Endothelial cell of umbilical vein (primary cell): ENCODE measurements at regions of chr21 and their contacts with region 1.

Region 1: GRCh38 chr21:41167348-41168342 is at the start of gene BACE2:
- DNase-seq: peak; percentile 72
- H3K4me3 ChIP-seq: peak within 1 kb of the TSS; percentile 77 to 95 (median 83)
- H3K27ac ChIP-seq: peak within 1 kb of the TSS; percentile 70
- H3K4me1 ChIP-seq: peaks cover 32% of the 10 kb centered on the region
- H3K27me3 ChIP-seq: no peaks in the 10 kb centered on the region
- CTCF ChIP-seq: peak; percentile 53 to 63
- POLR2A ChIP-seq: no peak
- total RNA-seq, gene BACE2: 128 and 184 TPM in 2 replicates

Region 2: DNA sequence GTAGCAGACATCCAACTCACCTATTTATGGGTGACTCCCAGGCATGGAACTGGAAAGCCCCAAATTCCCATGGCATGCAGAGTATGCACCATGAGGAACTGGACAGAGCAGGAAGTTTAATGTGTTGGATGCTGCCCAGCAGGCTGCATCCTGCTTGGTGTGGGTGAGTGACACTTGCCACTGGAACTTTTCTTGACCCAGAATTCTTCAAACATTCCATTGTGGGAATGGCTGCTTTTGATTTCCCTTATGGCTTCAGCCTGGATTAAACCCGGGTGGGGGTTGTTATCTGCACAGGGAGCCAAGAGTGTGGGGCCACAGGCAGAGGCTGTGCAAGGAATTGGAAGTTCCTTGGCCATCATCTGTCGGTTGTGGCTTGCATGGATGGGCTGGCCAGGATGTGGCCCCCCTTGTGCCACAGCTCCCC is 26.6 kb before region 1 on chr21:
- CTCF ChIA-PET with region 1: no interaction called
- POLR2A ChIA-PET with region 1: no interaction called
- dilution Hi-C with region 1: no loop called
- intact Hi-C with region 1: loop called (anchors 2 kb)
- DNase-seq: peak; percentile 40
- H3K4me3 ChIP-seq: no peak overlapping the region
- H3K27ac ChIP-seq: no peak overlapping the region
- H3K4me1 ChIP-seq: no peaks in the 10 kb centered on the region
- H3K27me3 ChIP-seq: no peaks in the 10 kb centered on the region
- CTCF ChIP-seq: no peak
- POLR2A ChIP-seq: no peak

Region 3: GRCh38 chr21:41183575-41183974 is 15.9 kb after region 1 on chr21:
- CTCF ChIA-PET with region 1: interaction called, 18 read pairs
- POLR2A ChIA-PET with region 1: no interaction called
- dilution Hi-C with region 1: no loop called
- intact Hi-C with region 1: no loop called
- DNase-seq: no peak
- H3K4me3 ChIP-seq: no peak overlapping the region
- H3K27ac ChIP-seq: no peak overlapping the region
- H3K4me1 ChIP-seq: no peaks in the 10 kb centered on the region
- H3K27me3 ChIP-seq: no peaks in the 10 kb centered on the region
- CTCF ChIP-seq: no peak
- POLR2A ChIP-seq: no peak

Region 4: GRCh38 chr21:41207401-41208068 is 39.9 kb after region 1 on chr21:
- CTCF ChIA-PET with region 1: interaction called, 6 read pairs
- POLR2A ChIA-PET with region 1: no interaction called
- dilution Hi-C with region 1: no loop called
- intact Hi-C with region 1: loop called (anchors 5 kb)
- DNase-seq: peak; percentile 80
- H3K4me3 ChIP-seq: no peak overlapping the region
- H3K27ac ChIP-seq: no peak overlapping the region
- H3K4me1 ChIP-seq: peaks cover 2% of the 10 kb centered on the region
- H3K27me3 ChIP-seq: no peaks in the 10 kb centered on the region
- CTCF ChIP-seq: no peak
- POLR2A ChIP-seq: no peak

Region 5: GRCh38 chr21:41247561-41248284 is 80.1 kb after region 1 on chr21:
- CTCF ChIA-PET with region 1: interaction called, 6 read pairs
- POLR2A ChIA-PET with region 1: no interaction called
- dilution Hi-C with region 1: no loop called
- intact Hi-C with region 1: loop called (anchors 1 kb)
- DNase-seq: peak; percentile 97
- H3K4me3 ChIP-seq: no peak overlapping the region
- H3K27ac ChIP-seq: peak overlapping the region; percentile 99
- H3K4me1 ChIP-seq: peaks cover 36% of the 10 kb centered on the region
- H3K27me3 ChIP-seq: no peaks in the 10 kb centered on the region
- CTCF ChIP-seq: no peak
- POLR2A ChIP-seq: no peak

Region 6: DNA sequence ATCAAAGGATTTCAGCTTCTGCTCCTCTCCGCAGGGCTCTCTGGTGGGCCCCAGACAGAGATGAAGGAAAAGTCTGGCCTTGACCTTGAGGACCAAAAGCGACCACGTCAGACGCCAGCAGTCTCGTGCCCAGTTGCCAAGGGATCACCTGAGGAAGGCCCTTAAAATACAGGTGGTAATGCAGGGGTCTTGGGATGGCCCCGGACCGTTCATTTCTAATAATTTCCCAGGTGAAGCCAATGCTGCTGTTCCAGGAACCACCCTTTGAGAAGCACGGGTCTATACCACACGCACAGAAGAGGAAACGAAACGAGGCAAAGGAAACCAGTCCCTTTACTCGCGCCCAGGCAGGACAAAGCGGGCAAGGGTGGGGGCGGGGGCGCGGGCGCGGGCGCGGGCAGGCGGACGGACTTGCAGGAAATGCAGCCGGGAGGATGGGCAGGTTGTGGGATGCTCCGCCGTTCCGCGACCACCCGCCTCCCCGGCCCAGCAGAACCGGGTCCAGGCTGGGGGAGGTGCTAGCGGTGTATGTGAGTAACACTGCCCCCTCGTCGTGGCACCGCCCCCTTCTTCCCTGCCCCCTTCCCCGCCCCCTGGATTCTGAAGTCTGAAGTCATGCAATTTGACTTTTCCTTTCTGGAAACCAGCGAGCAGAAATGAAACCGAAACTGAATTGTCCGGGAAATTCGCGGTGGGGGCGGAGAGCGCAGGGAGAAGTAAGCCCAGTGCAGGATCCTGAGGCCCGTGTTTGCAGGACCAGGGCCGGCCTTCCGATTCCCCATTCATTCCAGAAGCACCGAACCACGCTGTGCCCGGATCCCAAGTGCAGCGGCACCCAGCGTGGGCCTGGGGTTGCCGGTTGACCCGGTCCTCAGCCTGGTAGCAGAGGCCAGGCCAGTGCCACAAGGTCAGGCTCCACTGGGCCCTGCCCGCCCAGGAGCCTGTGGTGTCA is 252.5 kb after region 1 on chr21:
- CTCF ChIA-PET with region 1: no interaction called
- POLR2A ChIA-PET with region 1: no interaction called
- dilution Hi-C with region 1: no loop called
- intact Hi-C with region 1: loop called (anchors 5 kb)
- DNase-seq: peak; percentile 91
- H3K4me3 ChIP-seq: peak overlapping the region; percentile 37 to 82 (median 39)
- H3K27ac ChIP-seq: peak overlapping the region; percentile 27
- H3K4me1 ChIP-seq: no peaks in the 10 kb centered on the region
- H3K27me3 ChIP-seq: no peaks in the 10 kb centered on the region
- CTCF ChIP-seq: no peak
- POLR2A ChIP-seq: no peak